ENCODE measurements at regions of chr2 and their contacts with region 1.

Region 1: DNA sequence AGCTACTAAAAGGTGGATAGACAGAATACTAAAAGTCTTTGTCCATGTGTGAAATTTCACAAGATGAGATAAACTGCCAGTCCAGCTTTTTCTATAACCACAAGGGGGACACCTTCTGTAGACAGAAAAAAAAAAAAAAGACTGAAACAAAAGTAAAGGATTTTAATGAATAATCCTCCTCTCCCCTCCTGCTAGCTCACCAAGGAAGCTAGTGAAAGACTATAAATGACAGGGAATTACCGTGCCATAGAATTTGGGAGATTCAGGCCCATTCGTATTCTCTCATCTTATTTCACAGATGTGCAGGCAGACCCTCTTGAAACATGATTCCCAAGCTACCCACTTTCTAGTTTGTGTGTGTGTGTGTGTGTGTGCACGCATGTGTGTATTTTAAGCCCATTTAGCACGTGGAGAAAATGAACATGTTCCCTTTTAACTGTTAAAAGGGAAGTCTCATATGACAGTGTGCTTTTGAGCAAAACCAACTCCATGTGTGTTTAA is 36.3 kb upstream of the SLC8A1 start:
- DNase-seq: peak; percentile 56
- ATAC-seq: peak; percentile 56
- H3K4me3 ChIP-seq: no peak overlapping the region
- H3K27ac ChIP-seq: no peak overlapping the region
- H3K4me1 ChIP-seq: peaks cover 2% of the 10 kb centered on the region; the same call in 1 of the 2 replicates
- H3K27me3 ChIP-seq: no peaks in the 10 kb centered on the region
- CTCF ChIP-seq: peak; percentile 58
- POLR2A ChIP-seq: no peak
- RAD21 ChIP-seq: peak; percentile 40

Region 2: GRCh38 chr2:40346535-40347354 is 141.4 kb before region 1 on chr2:
- CTCF ChIA-PET with region 1: no interaction called
- POLR2A ChIA-PET with region 1: interaction called, 11 read pairs
- dilution Hi-C with region 1: no loop called
- in situ Hi-C with region 1: no loop called
- intact Hi-C with region 1: no loop called
- DNase-seq: peak; percentile 34
- ATAC-seq: 0 out of 2 replicates have a peak, but pooled peaks have one; percentile 33
- H3K4me3 ChIP-seq: no peak overlapping the region
- H3K27ac ChIP-seq: peak overlapping the region; percentile 55
- H3K4me1 ChIP-seq: peaks cover 23% of the 10 kb centered on the region
- H3K27me3 ChIP-seq: no peaks in the 10 kb centered on the region
- CTCF ChIP-seq: no peak
- POLR2A ChIP-seq: no peak
- RAD21 ChIP-seq: no peak